ENCODE measurements at regions of chr2 and their contacts with region 1.

Region 1: GRCh38 chr2:112658820-112659667 is 13.3 kb downstream of the SLC20A1 start:
- DNase-seq: no peak
- ATAC-seq: no peak
- H3K4me3 Mint-ChIP-seq: no peak overlapping the region
- H3K27ac Mint-ChIP-seq: peak overlapping the region; percentile 47
- H3K4me1 Mint-ChIP-seq: peaks cover 58% of the 10 kb centered on the region
- H3K27me3 Mint-ChIP-seq: no peaks in the 10 kb centered on the region

Region 2: DNA sequence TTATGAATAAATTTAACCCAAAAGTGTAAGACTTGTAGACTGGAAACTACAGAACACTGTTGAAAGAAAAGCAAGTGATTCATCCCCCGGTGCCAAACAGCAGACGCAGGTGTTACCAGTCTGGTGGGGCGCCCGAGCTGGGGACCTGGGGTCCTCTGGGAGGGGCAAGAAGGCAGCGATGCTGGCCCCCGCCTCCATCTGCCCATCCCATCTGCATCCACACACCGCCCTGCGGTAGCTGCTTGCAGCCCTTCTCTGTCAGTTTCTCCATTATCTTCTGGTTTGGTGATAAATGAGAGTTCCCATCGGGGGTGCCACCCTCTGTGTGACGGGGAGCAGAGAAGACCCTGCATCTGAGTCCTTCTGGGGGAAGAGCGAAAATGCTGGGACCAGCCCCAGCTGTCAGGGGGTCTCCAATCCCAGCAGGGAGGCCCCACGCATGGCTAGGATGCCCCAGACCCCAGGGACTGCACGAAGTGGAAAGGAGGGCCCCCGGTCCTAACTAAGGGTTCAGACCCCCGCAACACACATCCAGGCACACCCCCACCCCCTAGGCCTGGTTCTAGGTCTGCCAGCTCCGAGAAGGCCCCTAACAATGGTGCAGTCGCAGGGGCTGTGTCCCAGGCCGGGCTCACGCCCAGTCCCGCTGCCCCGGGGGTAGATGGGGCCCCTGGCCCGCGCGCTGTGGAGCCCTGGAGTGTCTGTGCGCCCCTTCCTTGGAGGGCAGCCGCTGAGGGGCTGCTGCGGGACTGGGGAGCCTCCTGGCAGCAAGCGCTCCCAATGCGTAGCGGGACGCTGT is 224.9 kb before region 1 on chr2:
- CTCF ChIA-PET with region 1: no interaction called
- POLR2A ChIA-PET with region 1: no interaction called
- intact Hi-C with region 1: no loop called
- DNase-seq: no peak
- ATAC-seq: no peak
- H3K4me3 Mint-ChIP-seq: peak overlapping the region; percentile 65
- H3K27ac Mint-ChIP-seq: no peak overlapping the region
- H3K4me1 Mint-ChIP-seq: peaks cover 10% of the 10 kb centered on the region
- H3K27me3 Mint-ChIP-seq: peaks cover 5% of the 10 kb centered on the region

Region 3: GRCh38 chr2:112593736-112594510 is 65.1 kb before region 1 on chr2:
- CTCF ChIA-PET with region 1: no interaction called
- POLR2A ChIA-PET with region 1: no interaction called
- intact Hi-C with region 1: loop called in 1 of 2 experiments (anchors 2 kb)
- DNase-seq: no peak
- ATAC-seq: no peak
- H3K4me3 Mint-ChIP-seq: no peak overlapping the region
- H3K27ac Mint-ChIP-seq: no peak overlapping the region
- H3K4me1 Mint-ChIP-seq: no peaks in the 10 kb centered on the region
- H3K27me3 Mint-ChIP-seq: no peaks in the 10 kb centered on the region

Region 4: GRCh38 chr2:112606488-112606902 is 52.5 kb before region 1 on chr2:
- CTCF ChIA-PET with region 1: no interaction called
- POLR2A ChIA-PET with region 1: no interaction called
- intact Hi-C with region 1: no loop called
- DNase-seq: no peak
- ATAC-seq: no peak
- H3K4me3 Mint-ChIP-seq: no peak overlapping the region
- H3K27ac Mint-ChIP-seq: no peak overlapping the region
- H3K4me1 Mint-ChIP-seq: no peaks in the 10 kb centered on the region
- H3K27me3 Mint-ChIP-seq: no peaks in the 10 kb centered on the region

Measured in activated CD4-positive, alpha-beta T cell treated with anti-CD3 and anti-CD28 coated beads for 36 hours (primary cell).